OCI-LY7 (cell line): ENCODE measurements at regions of chr5 and their contacts with region 1.

Region 1: DNA sequence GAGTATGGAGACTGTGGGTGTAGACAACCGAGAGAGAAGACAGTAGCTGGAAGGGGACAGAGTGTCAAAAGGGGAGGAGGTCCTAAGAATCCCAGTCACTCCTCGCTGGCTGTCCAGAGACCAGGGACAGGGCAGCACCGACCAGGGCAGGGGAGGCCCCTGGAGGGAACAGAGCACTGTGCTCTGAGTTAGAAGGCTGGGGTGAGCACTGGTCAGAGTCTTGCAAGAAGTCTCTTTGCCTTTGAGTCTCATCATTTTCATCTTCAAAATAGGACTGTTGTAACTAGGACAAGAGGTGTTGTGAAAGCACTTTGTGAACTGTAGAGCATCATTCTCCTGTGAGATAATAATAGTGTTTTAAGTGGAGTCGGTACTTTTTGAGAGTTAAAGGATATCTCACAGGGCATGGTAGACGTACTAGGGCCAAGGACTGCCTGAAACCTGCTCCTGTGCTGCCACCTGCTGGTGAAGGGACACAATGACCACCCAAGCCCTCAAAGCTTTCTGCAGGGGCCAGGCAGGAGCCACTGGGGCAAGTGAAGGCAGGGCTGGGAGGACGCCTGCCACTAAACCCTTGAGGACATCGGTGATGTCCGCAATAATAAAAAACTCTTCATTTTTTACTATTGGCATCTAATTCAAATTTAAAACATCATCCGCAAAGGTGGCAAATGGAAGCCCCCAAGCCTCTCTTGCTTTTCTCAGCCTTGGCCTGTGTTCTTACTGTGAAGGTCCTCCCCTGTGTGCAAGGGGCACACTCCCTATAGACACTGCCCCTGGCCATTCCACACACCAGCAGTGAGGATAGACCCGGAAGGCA is 28.2 kb downstream of the SLC6A7 start:
- DNase-seq: peak; percentile 82
- H3K4me3 ChIP-seq: no peak overlapping the region
- H3K27ac ChIP-seq: no peak overlapping the region
- H3K4me1 ChIP-seq: no peaks in the 10 kb centered on the region
- CTCF ChIP-seq: peak; percentile 93

Region 2: GRCh38 chr5:150034662-150035061 is 183.4 kb before region 1 on chr5:
- CTCF ChIA-PET with region 1: no interaction called
- POLR2A ChIA-PET with region 1: no interaction called
- intact Hi-C with region 1: no loop called
- DNase-seq: no peak
- H3K4me3 ChIP-seq: no peak overlapping the region
- H3K27ac ChIP-seq: no peak overlapping the region
- H3K4me1 ChIP-seq: peaks cover 18% of the 10 kb centered on the region
- CTCF ChIP-seq: no peak

Region 3: DNA sequence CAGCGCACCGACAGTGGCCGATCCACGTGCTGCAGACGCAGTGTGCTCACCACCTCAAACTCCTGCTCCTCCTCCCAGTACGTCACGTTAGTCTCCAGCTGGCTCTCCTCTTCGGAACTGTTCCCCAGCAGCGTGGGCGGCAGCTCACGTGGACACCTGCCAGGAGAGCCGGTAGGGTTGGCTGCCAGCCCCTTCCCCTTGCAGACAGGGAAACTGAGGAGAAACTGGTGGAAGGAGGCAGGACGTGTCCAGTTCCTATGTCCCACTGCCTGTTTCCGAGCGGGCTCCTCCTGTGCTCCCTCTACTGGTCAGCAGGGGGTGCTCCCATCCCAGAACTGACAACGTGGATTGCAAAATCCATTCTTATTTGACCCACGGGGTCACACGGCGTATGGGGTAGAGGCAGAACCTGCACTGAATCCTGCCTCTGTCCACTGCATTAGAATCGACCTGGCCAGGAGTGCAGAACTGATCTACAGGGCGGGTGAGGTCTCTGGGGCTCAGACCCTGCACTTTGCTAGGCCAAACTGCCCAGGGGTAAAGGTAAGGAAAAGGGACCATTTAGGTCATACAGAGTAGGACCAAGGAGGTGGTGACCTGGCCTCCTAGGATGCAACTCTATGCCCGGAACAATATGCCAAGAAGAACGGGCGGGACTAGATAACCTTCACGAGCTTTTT is 88.1 kb before region 1 on chr5:
- CTCF ChIA-PET with region 1: no interaction called
- POLR2A ChIA-PET with region 1: no interaction called
- intact Hi-C with region 1: loop called (anchors 1 kb)
- DNase-seq: peak; percentile 53
- H3K4me3 ChIP-seq: no peak overlapping the region
- H3K27ac ChIP-seq: no peak overlapping the region
- H3K4me1 ChIP-seq: no peaks in the 10 kb centered on the region
- CTCF ChIP-seq: peak; percentile 89

Region 4: DNA sequence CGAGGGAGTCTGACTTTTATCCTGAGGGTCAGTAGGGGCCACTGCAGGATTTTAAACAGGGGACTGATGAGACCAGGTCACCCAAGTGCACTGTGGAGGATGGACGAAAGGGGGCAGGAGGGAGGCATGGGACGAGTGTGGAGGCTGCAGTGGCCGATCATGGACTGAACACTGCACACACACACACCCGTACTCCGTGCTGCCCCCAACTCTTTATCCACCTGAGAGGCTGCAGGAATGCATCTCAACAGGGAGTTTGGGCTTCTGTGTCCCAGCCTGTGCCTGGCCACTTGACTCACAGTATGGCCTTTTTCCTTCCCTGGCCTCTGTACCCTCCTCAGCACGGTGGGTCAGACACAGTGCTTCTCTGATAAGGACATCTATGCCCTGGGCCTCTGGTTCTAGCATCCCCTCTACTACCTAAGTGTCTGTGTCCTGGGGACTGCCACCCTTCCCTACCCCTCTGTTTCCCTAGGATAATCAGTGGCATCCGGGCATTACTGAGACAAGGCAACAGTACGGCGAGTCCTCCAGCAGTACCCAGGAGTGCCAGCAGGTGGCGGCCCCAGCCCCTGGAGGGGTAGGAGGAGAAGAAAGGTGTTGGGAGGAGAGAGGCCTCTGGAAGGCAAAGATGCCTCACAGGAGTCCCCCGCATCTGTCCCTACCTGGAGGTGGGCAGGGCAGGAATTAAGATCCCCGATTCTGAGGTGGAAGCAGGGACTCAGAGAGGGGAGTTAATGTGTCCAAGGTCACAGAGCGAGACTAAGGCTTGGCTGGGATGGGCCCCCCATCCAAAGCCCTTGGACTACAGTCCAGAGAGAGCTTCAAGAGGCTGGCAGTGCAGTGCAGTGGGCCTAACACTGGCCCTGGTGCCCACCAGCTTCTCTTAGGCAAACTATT is 56.6 kb before region 1 on chr5:
- CTCF ChIA-PET with region 1: interaction called, 4 read pairs
- POLR2A ChIA-PET with region 1: no interaction called
- intact Hi-C with region 1: loop called (anchors 1 kb)
- DNase-seq: peak; percentile 69
- H3K4me3 ChIP-seq: no peak overlapping the region
- H3K27ac ChIP-seq: no peak overlapping the region
- H3K4me1 ChIP-seq: peaks cover 13% of the 10 kb centered on the region
- CTCF ChIP-seq: peak; percentile 91